Heart right ventricle (tissue), 16 donors: ENCODE measurements at regions of chr1 and their contacts with region 1.

Region 1: GRCh38 chr1:111481387-111482221 is 7.8 kb downstream of the C1orf162 start:
- DNase-seq: peak; percentile 76 to 86
- ATAC-seq: peak; percentile 93 to 97 (median 96)
- H3K4me3 ChIP-seq: no peak overlapping the region
- H3K27ac ChIP-seq: peak overlapping the region in 4 of 10 donors; percentile 39 to 45 (median 44)
- H3K4me1 ChIP-seq: peaks cover 0 to 74% (median 26%) of the 10 kb centered on the region in 9 donors
- H3K27me3 ChIP-seq: no peaks in the 10 kb centered on the region
- CTCF ChIP-seq: peak; percentile 56 to 87 (median 73)

Region 2: DNA sequence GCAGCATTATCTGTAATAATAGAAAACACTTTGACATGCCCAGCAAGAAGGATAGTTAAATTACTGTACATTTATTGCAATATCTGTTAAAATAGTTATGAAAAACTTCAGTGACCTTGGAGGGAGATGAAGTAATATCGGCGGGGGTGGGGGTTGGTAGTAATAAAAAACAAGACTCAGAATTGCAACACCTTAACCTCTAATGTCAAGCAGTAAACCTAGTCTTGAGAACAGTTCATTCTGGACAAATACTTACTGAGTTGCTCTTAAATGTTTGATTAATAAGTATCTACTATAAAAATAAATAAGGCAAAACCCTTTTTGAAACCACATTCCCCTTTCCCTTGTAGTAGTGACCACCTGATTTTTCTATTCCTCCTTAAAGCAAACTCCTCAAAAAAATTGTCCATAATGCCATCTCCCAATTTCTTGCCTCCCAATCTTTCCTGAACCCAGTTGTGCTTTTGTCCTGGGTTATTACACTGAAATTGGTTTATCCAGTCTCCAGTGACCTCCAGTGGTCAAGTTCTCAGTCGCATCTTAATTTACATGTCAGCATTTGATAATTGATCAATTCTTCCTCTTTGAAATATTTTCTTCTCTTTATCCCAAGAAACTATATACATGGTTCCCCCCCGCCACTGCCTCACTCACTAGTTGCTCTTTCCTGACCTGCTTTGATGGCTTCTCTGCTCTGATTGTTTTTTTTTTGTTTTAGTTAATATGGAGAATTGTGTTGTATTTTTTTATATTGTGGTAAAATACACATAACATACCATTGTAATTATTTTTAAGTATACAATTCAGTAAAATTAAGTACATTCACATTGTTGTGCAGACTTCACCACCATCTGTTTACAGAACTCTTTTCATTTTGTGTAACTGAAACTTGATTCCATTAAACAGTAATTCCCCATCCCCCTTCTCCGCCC is 174.7 kb after region 1 on chr1:
- intact Hi-C with region 1: loop called in 3 of 10 experiments (anchors 2 to 5 kb)
- DNase-seq: peak in 1 of 2 donors; percentile 41
- ATAC-seq: peak in 7 of 8 donors; percentile 67 to 75 (median 70)
- H3K4me3 ChIP-seq: no peak overlapping the region
- H3K27ac ChIP-seq: peak overlapping the region in 2 of 10 donors; percentile 16 to 22
- H3K4me1 ChIP-seq: peaks cover 0 to 80% (median 33%) of the 10 kb centered on the region in 9 donors
- H3K27me3 ChIP-seq: no peaks in the 10 kb centered on the region
- CTCF ChIP-seq: peak; percentile 31 to 81 (median 67)

Region 3: GRCh38 chr1:111709986-111710385 is 228.4 kb after region 1 on chr1:
- intact Hi-C with region 1: loop called in 3 of 10 experiments (anchors 5 kb)
- DNase-seq: no peak
- ATAC-seq: no peak
- H3K4me3 ChIP-seq: no peak overlapping the region
- H3K27ac ChIP-seq: no peak overlapping the region
- H3K4me1 ChIP-seq: peaks cover 0 to 10% (median 0%) of the 10 kb centered on the region in 9 donors
- H3K27me3 ChIP-seq: no peaks in the 10 kb centered on the region
- CTCF ChIP-seq: no peak

Region 4: DNA sequence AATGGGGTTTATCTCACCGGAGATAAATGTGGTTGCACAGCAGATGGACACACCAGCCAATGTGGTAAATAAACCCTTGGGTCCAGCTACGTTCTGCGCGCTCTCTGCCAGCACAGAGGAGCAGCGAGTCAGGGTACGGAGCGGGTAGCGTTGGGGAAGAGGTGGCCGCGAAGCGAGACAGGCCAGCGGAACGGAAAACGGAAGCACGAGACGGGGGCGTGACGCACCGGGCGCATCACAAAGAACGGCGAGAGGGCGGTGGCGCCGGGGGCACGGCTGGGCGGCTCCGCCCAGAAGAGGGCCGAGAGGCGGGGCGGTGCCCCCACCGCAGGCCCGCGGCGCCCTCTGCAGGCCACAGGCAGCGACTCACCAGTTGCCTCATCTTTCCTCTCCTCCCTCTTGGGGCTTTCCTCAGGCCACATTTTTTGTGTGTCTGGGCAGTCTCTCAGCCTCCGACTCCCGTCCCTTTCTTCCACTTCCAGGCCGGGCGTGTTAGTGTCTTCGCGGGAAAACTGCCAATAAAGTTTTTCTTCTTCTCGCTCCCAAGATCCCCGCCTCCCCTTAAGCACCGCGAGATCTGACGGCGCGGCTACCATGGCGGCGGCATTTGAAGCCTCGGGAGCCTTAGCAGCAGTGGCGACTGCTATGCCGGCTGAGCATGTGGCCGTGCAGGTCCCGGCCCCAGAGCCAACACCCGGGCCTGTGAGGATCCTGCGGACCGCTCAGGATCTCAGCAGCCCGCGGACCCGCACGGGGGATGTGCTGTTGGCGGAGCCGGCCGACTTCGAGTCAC is 273.9 kb after region 1 on chr1 and contains the start of gene DDX20:
- intact Hi-C with region 1: loop called in 5 of 10 experiments (anchors 5 to 10 kb)
- DNase-seq: peak; percentile 92 to 93
- ATAC-seq: peak; percentile 97 to 99 (median 98)
- H3K4me3 ChIP-seq: peak within 1 kb of the TSS; percentile 58 to 90 (median 80)
- H3K27ac ChIP-seq: peak within 1 kb of the TSS; percentile 73 to 96 (median 92)
- H3K4me1 ChIP-seq: peaks cover 0 to 47% (median 21%) of the 10 kb centered on the region in 9 donors
- H3K27me3 ChIP-seq: no peaks in the 10 kb centered on the region
- CTCF ChIP-seq: peak; percentile 81 to 99 (median 95)
- total RNA-seq, gene DDX20: 5.0 to 10.0 (median 6.5) TPM

Region 5: GRCh38 chr1:111762332-111762731 is 280.7 kb after region 1 on chr1:
- intact Hi-C with region 1: loop called in 8 of 10 experiments (anchors 5 to 10 kb)
- DNase-seq: no peak
- ATAC-seq: no peak
- H3K4me3 ChIP-seq: no peak overlapping the region
- H3K27ac ChIP-seq: no peak overlapping the region
- H3K4me1 ChIP-seq: peaks cover 0 to 12% (median 2%) of the 10 kb centered on the region in 9 donors
- H3K27me3 ChIP-seq: no peaks in the 10 kb centered on the region
- CTCF ChIP-seq: no peak

Region 6: GRCh38 chr1:111769517-111770146 is 288.0 kb after region 1 on chr1:
- intact Hi-C with region 1: loop called in 6 of 10 experiments (anchors 1 to 10 kb)
- DNase-seq: peak in 1 of 2 donors; percentile 24
- ATAC-seq: peak in 4 of 8 donors; percentile 41 to 71 (median 48)
- H3K4me3 ChIP-seq: no peak overlapping the region
- H3K27ac ChIP-seq: no peak overlapping the region
- H3K4me1 ChIP-seq: peaks cover 0 to 7% (median 0%) of the 10 kb centered on the region in 9 donors
- H3K27me3 ChIP-seq: no peaks in the 10 kb centered on the region
- CTCF ChIP-seq: peak; percentile 67 to 88 (median 81)

Region 7: DNA sequence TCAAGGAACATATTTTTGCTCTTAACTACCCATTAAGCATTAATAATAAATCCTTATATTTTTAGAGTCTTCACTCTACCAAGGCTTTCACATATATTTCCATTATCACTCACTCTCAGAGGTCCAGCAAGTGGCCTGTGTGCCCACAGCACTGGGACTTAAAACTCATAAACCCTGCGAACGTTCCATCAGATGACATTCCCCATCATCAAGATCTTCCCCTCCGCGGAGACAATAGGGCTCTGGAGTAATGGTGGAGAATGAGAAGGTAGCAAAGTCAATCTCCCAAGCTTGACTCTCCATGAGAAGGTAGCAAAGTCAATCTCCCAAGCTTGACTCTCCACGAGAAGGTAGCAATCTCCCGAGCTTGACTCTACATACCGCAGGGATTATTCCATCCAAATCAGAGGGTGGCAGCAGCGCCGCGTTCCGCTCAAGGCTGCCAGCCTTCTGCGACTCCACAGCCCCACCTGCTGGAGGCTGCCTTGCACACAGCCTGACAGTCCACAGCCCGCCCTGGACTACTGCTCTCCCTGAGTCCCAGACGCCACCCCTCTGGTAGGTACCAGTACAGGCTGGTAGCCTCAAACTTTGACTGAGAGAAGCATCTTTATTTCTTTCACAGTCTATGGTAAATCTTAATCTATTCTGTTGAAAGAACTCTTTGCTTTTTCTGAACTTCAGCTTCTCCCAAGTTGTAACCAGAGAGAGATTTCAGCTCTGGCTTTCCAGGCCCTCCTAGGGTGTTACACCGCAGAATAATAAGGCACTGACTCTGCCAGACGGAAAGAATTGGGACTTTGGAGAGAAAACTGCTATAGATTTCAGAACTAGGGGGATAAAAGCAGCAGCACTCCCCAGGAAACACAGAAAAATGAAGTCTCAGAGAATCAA is 888.0 kb after region 1 on chr1:
- intact Hi-C with region 1: loop called in 3 of 10 experiments (anchors 10 kb)
- DNase-seq: peak; percentile 85 to 88
- ATAC-seq: peak; percentile 97 to 99 (median 99)
- H3K4me3 ChIP-seq: no peak overlapping the region
- H3K27ac ChIP-seq: no peak overlapping the region
- H3K4me1 ChIP-seq: peaks cover 0 to 4% (median 0%) of the 10 kb centered on the region in 9 donors
- H3K27me3 ChIP-seq: peaks cover 0 to 38% (median 0%) of the 10 kb centered on the region in 7 donors
- CTCF ChIP-seq: peak; percentile 91 to 99 (median 97)